ENCODE measurements at regions of chr9 and their contacts with region 1.

Region 1: DNA sequence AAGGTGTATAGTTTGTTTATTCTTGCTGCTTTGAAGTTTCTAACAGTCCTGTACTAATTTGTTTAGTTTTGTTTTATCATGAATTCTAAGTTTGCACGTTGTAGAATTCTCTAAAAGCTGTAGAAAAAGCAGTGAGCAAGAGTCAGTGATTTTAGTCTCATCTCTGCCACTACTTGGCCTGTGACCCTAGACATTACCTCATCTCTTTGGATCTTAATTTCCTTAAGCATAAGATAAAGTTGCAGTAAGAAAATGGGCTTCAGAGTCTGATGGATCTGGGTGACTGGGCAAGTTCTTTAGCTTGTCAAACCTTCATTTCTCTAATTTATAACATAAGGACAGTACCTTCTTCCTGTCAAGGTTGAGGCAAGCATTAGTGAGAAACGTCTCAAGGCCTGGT is 247.9 kb downstream of the DMRT2 start:
- DNase-seq: no peak
- ATAC-seq: no peak
- H3K4me3 ChIP-seq: no peak overlapping the region
- H3K27ac ChIP-seq: no peak overlapping the region
- H3K4me1 ChIP-seq: no peaks in the 10 kb centered on the region
- H3K27me3 ChIP-seq: no peaks in the 10 kb centered on the region; a peak in 1 of 4 replicates
- CTCF ChIP-seq: no peak
- EP300 ChIP-seq: no peak
- POLR2A ChIP-seq: no peak
- RAD21 ChIP-seq: no peak

Region 2: DNA sequence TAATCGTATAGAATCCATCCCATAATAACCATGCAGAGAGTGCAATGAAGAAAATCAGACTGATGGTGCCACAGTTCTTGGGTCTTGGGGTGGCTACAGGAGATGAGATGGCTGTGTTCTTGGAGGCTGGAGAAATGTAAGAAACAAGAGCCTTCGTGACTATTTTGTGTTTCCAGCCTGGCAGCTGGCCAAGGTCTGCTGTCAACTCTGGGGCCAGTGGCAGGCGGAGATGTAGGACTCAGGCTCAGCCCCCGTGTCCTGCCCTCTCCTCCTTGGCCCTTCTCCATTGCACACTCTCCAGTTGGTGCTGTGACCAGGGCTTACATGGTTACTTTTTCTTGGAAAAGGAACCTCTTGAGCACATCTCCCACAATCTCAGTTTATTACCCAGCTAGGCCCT is 12.5 kb before region 1 on chr9:
- CTCF ChIA-PET with region 1: interaction called, 5 read pairs
- POLR2A ChIA-PET with region 1: interaction called, 4 read pairs
- RAD21 ChIA-PET with region 1: interaction called, 5 read pairs
- SMC1A ChIA-PET with region 1: interaction called, 15 read pairs
- in situ Hi-C with region 1: no loop called
- intact Hi-C with region 1: no loop called
- DNase-seq: no peak
- ATAC-seq: no peak
- H3K4me3 ChIP-seq: no peak overlapping the region
- H3K27ac ChIP-seq: no peak overlapping the region
- H3K4me1 ChIP-seq: no peaks in the 10 kb centered on the region
- H3K27me3 ChIP-seq: no peaks in the 10 kb centered on the region
- CTCF ChIP-seq: no peak
- EP300 ChIP-seq: no peak
- POLR2A ChIP-seq: no peak
- RAD21 ChIP-seq: no peak

Region 3: GRCh38 chr9:1443450-1443849 is 145.4 kb after region 1 on chr9:
- CTCF ChIA-PET with region 1: no interaction called
- POLR2A ChIA-PET with region 1: no interaction called
- RAD21 ChIA-PET with region 1: no interaction called
- SMC1A ChIA-PET with region 1: no interaction called
- in situ Hi-C with region 1: no loop called
- intact Hi-C with region 1: no loop called
- DNase-seq: no peak
- ATAC-seq: peak; percentile 71
- H3K4me3 ChIP-seq: no peak overlapping the region
- H3K27ac ChIP-seq: no peak overlapping the region
- H3K4me1 ChIP-seq: no peaks in the 10 kb centered on the region
- H3K27me3 ChIP-seq: no peaks in the 10 kb centered on the region
- CTCF ChIP-seq: no peak
- EP300 ChIP-seq: no peak
- POLR2A ChIP-seq: no peak
- RAD21 ChIP-seq: no peak